B cell (primary cell): ENCODE measurements at regions of chr6 and their contacts with region 1.

Region 1: GRCh38 chr6:28235912-28236452 is 10.9 kb downstream of the ZSCAN9 start:
- DNase-seq: no peak
- ATAC-seq: no peak
- H3K4me3 ChIP-seq: no peak overlapping the region
- H3K4me3 Mint-ChIP-seq: no peak overlapping the region
- H3K27ac ChIP-seq: no peak overlapping the region
- H3K27ac Mint-ChIP-seq: no peak overlapping the region
- H3K4me1 ChIP-seq: no peaks in the 10 kb centered on the region
- H3K4me1 Mint-ChIP-seq: no peaks in the 10 kb centered on the region
- H3K27me3 ChIP-seq: no peaks in the 10 kb centered on the region
- H3K27me3 Mint-ChIP-seq: no peaks in the 10 kb centered on the region
- CTCF ChIP-seq: no peak

Region 2: DNA sequence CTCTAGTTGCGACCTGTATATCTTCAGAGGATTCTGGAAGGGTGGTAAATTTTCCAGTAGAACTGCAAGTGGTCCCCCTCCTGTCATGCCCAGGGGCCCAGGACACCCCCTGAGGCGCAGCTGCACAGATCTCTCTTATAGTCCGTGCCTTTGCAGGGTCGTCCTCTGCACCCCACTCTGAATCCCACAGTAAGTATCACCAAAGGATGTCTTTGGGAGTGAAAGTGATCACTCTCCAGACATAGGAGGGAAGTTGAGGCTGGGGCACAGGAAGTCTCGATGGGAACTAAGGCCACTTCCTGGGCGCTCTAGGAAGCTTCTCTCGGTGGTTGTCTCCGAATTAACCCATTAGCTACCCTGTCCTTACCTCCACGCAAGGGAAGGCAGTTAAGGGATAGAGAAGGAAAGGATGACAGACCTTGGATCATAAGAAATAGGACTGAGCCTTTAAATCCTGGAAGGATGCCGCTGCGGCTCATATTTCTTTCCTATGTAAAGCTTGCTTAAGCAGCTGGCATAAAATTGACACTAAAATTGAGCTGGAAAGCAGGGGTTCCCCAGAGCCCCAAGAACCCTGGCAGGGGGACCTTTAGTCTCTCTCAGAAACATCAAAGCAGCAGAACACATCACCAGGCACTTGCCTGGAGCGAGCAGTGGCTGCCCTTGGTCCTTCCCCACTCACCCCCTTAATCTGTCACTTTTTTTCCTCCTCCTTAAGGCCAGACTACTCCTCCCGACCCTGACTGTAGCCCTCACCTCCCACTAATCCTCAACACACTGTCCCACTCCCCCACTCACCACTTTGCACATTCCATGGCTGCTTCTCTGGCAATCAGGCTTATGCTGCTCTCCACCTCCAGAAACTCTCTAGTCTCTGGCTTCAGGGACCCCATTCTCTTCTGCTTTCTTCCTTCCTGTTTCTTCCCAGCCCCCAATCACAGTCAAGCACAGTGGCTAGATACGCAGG is 16.3 kb after region 1 on chr6 and contains the start of gene ZKSCAN4:
- CTCF ChIA-PET with region 1: no interaction called
- POLR2A ChIA-PET with region 1: no interaction called
- intact Hi-C with region 1: no loop called
- DNase-seq: peak; percentile 89
- ATAC-seq: peak; percentile 90
- H3K4me3 ChIP-seq: peak within 1 kb of the TSS; percentile 59 to 99 (median 94)
- H3K4me3 Mint-ChIP-seq: peak within 1 kb of the TSS; percentile 98
- H3K27ac ChIP-seq: peak within 1 kb of the TSS; percentile 22 to 58
- H3K27ac Mint-ChIP-seq: peak within 1 kb of the TSS; percentile 78
- H3K4me1 ChIP-seq: peaks cover 14 to 20% of the 10 kb centered on the region in 2 donors
- H3K4me1 Mint-ChIP-seq: peaks cover 31% of the 10 kb centered on the region
- H3K27me3 ChIP-seq: peaks cover 0 to 3% (median 2%) of the 10 kb centered on the region in 4 experiments
- H3K27me3 Mint-ChIP-seq: no peaks in the 10 kb centered on the region
- CTCF ChIP-seq: no peak
- total RNA-seq, gene ZKSCAN4: 10.9 and 12.1 TPM in 2 replicates

Region 3: DNA sequence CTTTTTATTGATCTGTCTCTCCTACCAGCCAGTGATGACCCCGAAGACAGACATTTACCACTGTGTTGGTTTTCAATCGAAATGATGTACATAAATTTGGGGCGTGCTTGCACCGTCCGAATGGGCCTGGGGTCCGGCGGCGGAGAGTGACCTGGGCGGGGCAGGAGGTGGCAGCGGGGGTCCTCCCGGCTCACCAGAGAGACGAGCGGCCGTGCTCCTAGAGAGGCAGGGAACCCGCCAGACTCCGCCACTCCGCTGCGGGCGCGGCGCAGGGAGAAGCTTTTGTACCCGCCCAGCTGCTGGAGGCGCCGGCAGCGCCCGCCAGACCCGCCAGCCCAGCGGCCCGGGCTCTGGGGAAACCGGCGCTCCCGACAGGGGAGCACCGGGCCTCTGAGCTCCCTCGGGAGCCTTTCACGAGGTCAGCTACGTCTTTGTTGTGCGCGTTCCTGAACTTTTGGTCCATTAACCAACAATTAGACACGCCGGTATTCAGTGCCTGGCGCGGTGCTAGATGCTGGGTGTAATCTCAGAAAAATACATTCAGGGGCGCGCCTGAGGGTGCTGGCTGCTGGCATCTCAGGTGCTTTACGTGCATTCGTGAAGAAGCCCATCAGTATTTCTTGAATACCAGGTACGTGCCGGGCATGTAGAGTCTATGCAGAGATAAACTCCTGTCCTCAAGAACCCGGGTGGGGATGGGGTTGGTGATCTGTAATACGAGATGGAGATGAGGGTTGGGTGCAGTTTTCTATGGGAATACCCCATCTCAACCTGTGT is 45.5 kb after region 1 on chr6 and contains the start of gene PGBD1:
- CTCF ChIA-PET with region 1: no interaction called
- POLR2A ChIA-PET with region 1: no interaction called
- intact Hi-C with region 1: loop called (anchors 5 kb)
- DNase-seq: peak; percentile 63
- ATAC-seq: peak; percentile 87
- H3K4me3 ChIP-seq: peak within 1 kb of the TSS; percentile 45 to 61 (median 53)
- H3K4me3 Mint-ChIP-seq: peak within 1 kb of the TSS; percentile 93
- H3K27ac ChIP-seq: no peak within 1 kb of the TSS
- H3K27ac Mint-ChIP-seq: no peak within 1 kb of the TSS
- H3K4me1 ChIP-seq: peaks cover 7 to 9% of the 10 kb centered on the region in 2 donors
- H3K4me1 Mint-ChIP-seq: peaks cover 9% of the 10 kb centered on the region
- H3K27me3 ChIP-seq: peaks cover 0 to 16% (median 11%) of the 10 kb centered on the region in 4 experiments
- H3K27me3 Mint-ChIP-seq: peaks cover 19% of the 10 kb centered on the region
- CTCF ChIP-seq: no peak
- total RNA-seq, gene PGBD1: 1.8 and 2.4 TPM in 2 replicates